ENCODE measurements at regions of chr1 and their contacts with region 1.

Region 1: DNA sequence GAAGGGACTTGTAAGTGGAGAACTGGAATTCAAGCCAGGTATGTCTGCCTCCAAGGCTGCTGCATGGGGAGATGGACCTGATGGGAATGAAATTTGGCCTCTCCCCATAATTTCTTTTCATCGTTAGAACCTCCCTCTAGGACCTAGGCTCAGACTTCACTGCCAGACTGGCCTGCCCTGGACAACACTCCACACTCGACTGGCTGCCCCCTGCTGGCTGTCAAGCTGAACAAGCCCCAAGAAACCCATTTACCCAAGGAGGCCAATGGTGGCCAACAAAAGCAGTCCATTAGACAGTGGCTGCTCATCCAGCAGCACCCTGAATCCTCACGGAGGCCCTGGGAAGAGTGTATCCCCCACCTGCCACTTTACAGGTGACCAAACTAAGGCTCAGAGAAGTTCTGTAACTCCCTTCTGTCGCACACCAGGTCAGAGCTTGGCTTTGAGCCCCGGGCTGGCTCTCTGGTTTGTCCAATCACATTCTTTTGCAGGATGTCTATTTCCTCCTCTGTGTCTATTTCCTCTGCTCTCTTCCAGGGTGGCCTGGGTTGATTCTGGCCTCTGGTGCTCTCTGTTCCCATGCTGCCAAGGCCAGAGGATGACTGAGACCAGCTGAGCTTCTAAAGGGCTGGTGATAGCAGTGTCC is 3.8 kb downstream of the RNF186 start:
- DNase-seq: peak in 1 of 2 donors; percentile 31
- H3K4me3 ChIP-seq: no peak overlapping the region
- H3K27ac ChIP-seq: no peak overlapping the region
- H3K4me1 ChIP-seq: peaks cover 0 to 4% (median 0%) of the 10 kb centered on the region in 4 donors
- H3K27me3 ChIP-seq: no peaks in the 10 kb centered on the region
- CTCF ChIP-seq: peak; percentile 39 to 50

Region 2: GRCh38 chr1:19715334-19716203 is 95.8 kb before region 1 on chr1:
- intact Hi-C with region 1: loop called (anchors 5 kb)
- DNase-seq: peak; percentile 92 to 96
- H3K4me3 ChIP-seq: no peak overlapping the region
- H3K27ac ChIP-seq: peak overlapping the region in 1 of 2 donors; percentile 8
- H3K4me1 ChIP-seq: peaks cover 0 to 9% (median 7%) of the 10 kb centered on the region in 4 donors
- H3K27me3 ChIP-seq: no peaks in the 10 kb centered on the region
- CTCF ChIP-seq: peak; percentile 86